SK-N-SH (cell line): ENCODE measurements at regions of chr4 and their contacts with region 1.

Region 1: DNA sequence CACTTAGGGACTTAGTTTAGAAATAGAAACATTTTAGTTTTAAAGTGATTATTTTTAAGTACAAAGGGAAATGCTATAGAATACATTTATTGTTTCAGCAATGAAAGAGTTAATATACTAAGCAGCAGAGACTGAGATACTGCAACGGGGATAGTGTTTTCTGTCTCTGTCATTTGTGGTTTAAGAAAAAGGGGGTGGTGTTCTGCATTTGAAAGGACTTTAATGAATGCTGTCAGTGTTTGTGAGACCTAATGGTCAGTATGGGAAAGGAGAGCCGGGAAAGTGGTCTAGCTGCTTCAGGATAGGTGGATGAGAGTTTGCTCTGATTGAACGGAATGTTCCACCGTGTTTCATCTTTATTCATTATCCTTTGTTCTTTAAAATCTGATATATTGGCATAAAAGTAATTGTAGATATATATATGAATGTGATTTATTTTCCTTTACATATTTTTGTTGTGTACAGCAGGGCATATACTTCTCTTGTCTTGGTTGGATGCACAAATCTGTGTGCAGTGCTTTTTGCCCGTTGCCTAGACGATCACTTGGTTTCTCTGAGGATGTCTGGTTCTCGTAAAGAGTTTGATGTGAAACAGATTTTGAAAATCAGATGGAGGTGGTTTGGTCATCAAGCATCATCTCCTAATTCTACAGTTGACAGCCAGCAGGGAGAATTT is at the start of gene KLHL5:
- DNase-seq: peak; percentile 52
- H3K4me3 ChIP-seq: peak within 1 kb of the TSS; percentile 33 to 42
- H3K27ac ChIP-seq: peak within 1 kb of the TSS; percentile 64 to 80
- H3K4me1 ChIP-seq: peaks cover 0 to 14% of the 10 kb centered on the region in 2 experiments; a peak in 2 of 4 replicates
- H3K27me3 ChIP-seq: no peaks in the 10 kb centered on the region
- CTCF ChIP-seq: no peak
- EP300 ChIP-seq: peak in 1 of 2 experiments; percentile 28; a peak in 1 of 4 replicates
- RAD21 ChIP-seq: no peak
- polyA plus RNA-seq, gene KLHL5: 33.1 and 37.0 TPM in 2 replicates

Region 2: DNA sequence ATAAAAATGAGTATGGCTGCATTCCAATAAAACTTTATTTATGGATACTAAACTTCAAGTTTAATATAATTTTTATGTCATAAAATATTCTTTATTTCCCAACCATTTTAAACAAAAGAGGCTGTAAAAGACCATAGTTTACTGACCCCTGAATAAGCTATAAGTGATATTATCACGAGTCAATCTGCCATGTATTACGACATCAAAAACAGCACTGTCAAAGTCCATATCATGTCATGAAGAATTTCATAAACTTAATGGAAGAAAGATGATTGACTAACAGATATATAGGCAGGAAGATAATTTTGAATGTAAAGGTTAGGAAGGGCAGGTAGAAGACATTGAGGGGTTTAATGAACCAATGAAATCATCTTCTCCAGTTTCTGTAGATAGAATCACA is 48.2 kb before region 1 on chr4:
- CTCF ChIA-PET with region 1: no interaction called
- POLR2A ChIA-PET with region 1: no interaction called
- DNase-seq: no peak
- H3K4me3 ChIP-seq: no peak overlapping the region
- H3K27ac ChIP-seq: no peak overlapping the region
- H3K4me1 ChIP-seq: no peaks in the 10 kb centered on the region
- H3K27me3 ChIP-seq: no peaks in the 10 kb centered on the region
- CTCF ChIP-seq: no peak
- EP300 ChIP-seq: no peak
- RAD21 ChIP-seq: no peak

Region 3: DNA sequence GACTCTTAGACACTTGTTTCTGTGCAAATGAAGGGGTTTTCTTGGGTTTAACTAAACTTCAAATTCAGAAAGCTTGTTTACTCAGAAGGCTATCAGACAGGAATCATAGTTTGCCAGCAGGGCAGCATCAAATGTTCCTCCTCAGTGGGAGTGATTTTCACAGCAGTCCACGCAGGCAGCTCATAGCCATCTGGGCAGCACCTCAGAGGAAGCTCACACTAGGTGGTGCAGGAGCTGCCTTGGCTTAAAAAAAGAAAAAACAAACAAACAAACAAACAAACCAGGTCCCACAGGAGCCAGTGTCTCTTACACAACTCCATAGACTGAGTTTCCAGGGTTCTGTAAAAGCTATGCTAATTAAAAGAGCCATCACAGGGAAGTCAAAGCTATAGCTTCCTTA is 10.8 kb before region 1 on chr4:
- CTCF ChIA-PET with region 1: interaction called, 15 read pairs
- POLR2A ChIA-PET with region 1: no interaction called
- DNase-seq: no peak
- H3K4me3 ChIP-seq: no peak overlapping the region
- H3K27ac ChIP-seq: no peak overlapping the region
- H3K4me1 ChIP-seq: peaks cover 2 to 23% of the 10 kb centered on the region in 2 experiments; a peak in 3 of 4 replicates
- H3K27me3 ChIP-seq: no peaks in the 10 kb centered on the region
- CTCF ChIP-seq: no peak
- EP300 ChIP-seq: no peak
- RAD21 ChIP-seq: no peak

Region 4: DNA sequence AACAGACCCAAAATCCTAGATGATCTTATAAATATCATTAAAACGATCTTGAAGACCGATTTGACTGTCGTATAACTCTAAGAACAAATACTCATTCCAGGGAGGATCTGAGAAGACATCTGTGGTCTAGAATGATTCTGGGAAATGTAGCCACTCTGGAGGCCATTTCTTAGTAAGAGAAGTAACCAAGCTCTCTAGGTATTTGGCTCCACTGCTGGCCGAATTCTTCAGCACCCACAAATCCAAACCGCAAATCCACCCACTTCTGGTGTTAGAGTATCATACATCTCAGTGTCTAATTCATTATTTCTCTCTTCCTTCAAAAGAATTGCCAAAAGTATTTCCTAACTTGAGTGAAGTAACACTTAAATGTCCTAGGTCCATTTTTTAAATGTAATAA is 23.7 kb after region 1 on chr4:
- CTCF ChIA-PET with region 1: interaction called, 15 read pairs
- POLR2A ChIA-PET with region 1: no interaction called
- DNase-seq: no peak
- H3K4me3 ChIP-seq: no peak overlapping the region
- H3K27ac ChIP-seq: no peak overlapping the region
- H3K4me1 ChIP-seq: peaks cover 0 to 5% of the 10 kb centered on the region in 2 experiments; a peak in 1 of 4 replicates
- H3K27me3 ChIP-seq: no peaks in the 10 kb centered on the region
- CTCF ChIP-seq: no peak
- EP300 ChIP-seq: no peak
- RAD21 ChIP-seq: no peak

Region 5: GRCh38 chr4:39308611-39309010 is 246.4 kb after region 1 on chr4:
- CTCF ChIA-PET with region 1: no interaction called
- POLR2A ChIA-PET with region 1: no interaction called
- DNase-seq: no peak
- H3K4me3 ChIP-seq: no peak overlapping the region
- H3K27ac ChIP-seq: no peak overlapping the region
- H3K4me1 ChIP-seq: no peaks in the 10 kb centered on the region
- H3K27me3 ChIP-seq: no peaks in the 10 kb centered on the region
- CTCF ChIP-seq: no peak
- EP300 ChIP-seq: no peak
- RAD21 ChIP-seq: no peak

Region 6: DNA sequence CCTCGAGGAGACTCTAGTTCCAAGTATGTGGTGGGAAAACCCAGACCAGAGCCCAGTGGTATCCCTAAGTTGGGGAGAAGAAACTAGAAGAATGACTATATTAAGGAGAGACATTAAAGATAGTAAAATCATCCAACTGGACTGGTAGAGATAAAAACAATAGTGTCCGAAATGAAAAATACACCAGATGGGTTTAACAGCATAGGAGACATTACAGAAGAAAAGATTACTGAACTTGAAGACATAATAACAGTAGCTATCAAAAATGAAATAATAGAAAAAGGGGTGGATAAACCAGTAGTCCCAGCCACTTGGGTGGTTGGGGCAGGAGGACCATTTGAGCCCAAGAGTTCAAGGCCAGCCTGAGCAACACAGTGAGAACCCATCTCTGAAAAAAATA is 544.5 kb after region 1 on chr4:
- CTCF ChIA-PET with region 1: no interaction called
- POLR2A ChIA-PET with region 1: no interaction called
- DNase-seq: no peak
- H3K4me3 ChIP-seq: no peak overlapping the region
- H3K27ac ChIP-seq: no peak overlapping the region
- H3K4me1 ChIP-seq: no peaks in the 10 kb centered on the region
- H3K27me3 ChIP-seq: no peaks in the 10 kb centered on the region
- CTCF ChIP-seq: no peak
- EP300 ChIP-seq: no peak
- RAD21 ChIP-seq: no peak